Activated T-helper 1 cell treated with anti-CD3 and anti-CD28 coated beads, Interleukin-12 subunit alpha, Interleukin-12 subunit beta, Interleukin-2, Interleukin-4 antibody, amounts not matched to agents 30 ng/mL and 10 ng/mL and 1 ng/mL, durations not matched to agents 14 hours and 24 hours and 36 hours (primary cell): ENCODE measurements at regions of chr16 and their contacts with region 1.

Region 1: GRCh38 chr16:57576429-57576870 is 34.0 kb downstream of the ADGRG5 start:
- DNase-seq: peak; percentile 74
- H3K4me3 Mint-ChIP-seq: no peak overlapping the region
- H3K27ac Mint-ChIP-seq: peak overlapping the region; percentile 8
- H3K4me1 Mint-ChIP-seq: peaks cover 39% of the 10 kb centered on the region
- H3K27me3 Mint-ChIP-seq: peaks cover 2% of the 10 kb centered on the region

Region 2: DNA sequence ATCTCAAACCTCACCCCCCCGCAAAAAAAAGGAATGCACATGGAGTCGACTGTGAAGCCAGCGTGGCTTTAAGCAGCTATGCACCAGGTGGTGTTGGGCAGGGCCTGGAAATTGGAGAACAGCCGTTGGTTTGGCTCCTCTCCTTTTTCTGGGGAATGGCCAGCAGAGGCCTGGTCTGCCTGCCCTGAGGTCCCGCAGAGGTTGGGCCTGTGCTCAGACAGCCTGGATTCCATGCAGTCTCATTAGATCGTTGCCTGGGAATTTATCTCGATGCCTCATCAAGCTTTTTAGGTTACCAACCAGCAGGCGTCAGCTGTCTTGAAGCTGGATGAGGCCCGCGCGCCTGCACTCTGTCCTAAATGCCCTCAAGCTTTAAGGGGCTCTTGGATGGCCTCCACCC is 701.6 kb before region 1 on chr16:
- intact Hi-C with region 1: no loop called
- DNase-seq: no peak
- H3K4me3 Mint-ChIP-seq: no peak overlapping the region
- H3K27ac Mint-ChIP-seq: no peak overlapping the region
- H3K4me1 Mint-ChIP-seq: no peaks in the 10 kb centered on the region
- H3K27me3 Mint-ChIP-seq: peaks cover 3% of the 10 kb centered on the region

Region 3: DNA sequence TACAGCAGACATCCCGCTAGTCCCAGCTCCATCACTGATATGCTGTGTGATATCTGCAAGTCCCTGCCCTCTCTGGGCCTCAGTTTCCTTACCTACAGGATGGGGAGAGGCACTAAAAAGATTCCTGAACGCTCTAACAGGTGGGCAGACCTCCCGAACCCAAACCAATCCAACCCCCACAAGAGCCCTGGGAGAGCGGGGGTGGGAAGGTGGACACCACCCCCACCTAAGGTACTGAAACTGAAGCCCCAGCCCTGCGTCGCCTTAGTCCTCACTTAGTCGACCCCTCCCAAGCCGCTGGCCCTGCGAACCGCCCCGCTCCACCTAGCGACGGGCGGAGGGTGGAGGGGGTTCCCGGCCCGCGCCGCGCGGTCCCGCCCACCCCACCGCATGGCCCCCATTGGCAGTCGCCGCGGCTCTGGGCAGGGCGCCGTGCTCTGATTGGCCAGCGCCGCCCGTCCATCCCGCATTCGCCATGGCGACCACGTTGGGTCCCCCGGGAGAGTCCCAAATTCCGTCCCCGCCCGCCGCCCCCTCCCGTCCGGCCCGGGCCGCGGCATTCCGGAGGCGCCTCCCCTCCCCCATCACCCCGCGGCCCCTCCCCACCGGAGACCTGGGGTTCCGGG is 40.7 kb before region 1 on chr16:
- intact Hi-C with region 1: loop called (anchors 1 kb)
- DNase-seq: peak; percentile 92
- H3K4me3 Mint-ChIP-seq: peak overlapping the region; percentile 78
- H3K27ac Mint-ChIP-seq: peak overlapping the region; percentile 93
- H3K4me1 Mint-ChIP-seq: peaks cover 62% of the 10 kb centered on the region
- H3K27me3 Mint-ChIP-seq: no peaks in the 10 kb centered on the region

Region 4: GRCh38 chr16:57564571-57565270 is 11.7 kb before region 1 on chr16:
- intact Hi-C with region 1: no loop called
- DNase-seq: no peak
- H3K4me3 Mint-ChIP-seq: no peak overlapping the region
- H3K27ac Mint-ChIP-seq: no peak overlapping the region
- H3K4me1 Mint-ChIP-seq: no peaks in the 10 kb centered on the region
- H3K27me3 Mint-ChIP-seq: no peaks in the 10 kb centered on the region

Region 5: GRCh38 chr16:57600048-57600835 is 23.8 kb after region 1 on chr16:
- intact Hi-C with region 1: loop called (anchors 1 kb)
- DNase-seq: no peak
- H3K4me3 Mint-ChIP-seq: no peak overlapping the region
- H3K27ac Mint-ChIP-seq: peak overlapping the region; percentile 24
- H3K4me1 Mint-ChIP-seq: peaks cover 62% of the 10 kb centered on the region
- H3K27me3 Mint-ChIP-seq: no peaks in the 10 kb centered on the region

Region 6: DNA sequence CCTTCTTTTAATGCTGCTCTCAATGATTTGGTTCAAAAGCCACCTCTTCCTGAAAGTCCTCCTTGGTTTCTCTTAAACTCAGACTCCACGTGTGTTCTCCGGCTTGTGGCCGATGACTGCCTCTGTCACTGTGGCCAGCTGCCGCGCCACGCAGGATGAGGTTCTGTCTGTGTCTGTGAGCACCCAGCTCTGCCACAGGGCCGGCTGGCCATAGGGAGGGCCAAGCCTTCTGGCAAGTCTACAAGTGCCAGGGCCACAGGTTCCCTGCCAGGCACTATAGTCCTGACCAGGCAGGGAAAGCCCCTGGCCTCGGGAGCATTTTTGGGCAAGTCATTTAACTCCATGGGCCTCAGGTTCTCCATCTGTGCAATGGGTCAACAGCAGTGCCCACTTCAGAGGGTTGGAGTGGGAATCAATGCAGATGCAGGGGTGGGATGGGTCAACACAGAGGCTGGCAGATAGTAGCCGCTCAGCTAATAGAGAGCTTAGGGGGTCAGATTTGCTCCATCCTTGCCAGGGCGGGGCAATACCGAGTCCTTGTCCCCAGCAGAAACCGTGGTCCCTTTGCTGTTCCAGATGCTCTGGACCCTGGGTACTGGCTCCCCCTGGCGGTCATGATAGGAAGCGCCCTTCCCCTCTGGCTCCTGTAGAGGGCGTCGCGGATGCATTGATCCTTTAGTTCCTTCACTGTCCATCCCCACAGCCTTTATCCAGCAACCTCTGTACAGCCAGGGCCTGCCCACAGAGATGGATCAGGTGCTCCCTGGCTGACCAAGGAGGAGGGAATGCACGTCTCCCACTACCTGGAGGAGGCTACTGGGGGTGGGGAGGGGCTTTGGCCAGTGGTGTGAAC is 72.4 kb after region 1 on chr16:
- intact Hi-C with region 1: loop called (anchors 1 kb)
- DNase-seq: peak; percentile 81
- H3K4me3 Mint-ChIP-seq: no peak overlapping the region
- H3K27ac Mint-ChIP-seq: peak overlapping the region; percentile 45
- H3K4me1 Mint-ChIP-seq: peaks cover 34% of the 10 kb centered on the region
- H3K27me3 Mint-ChIP-seq: no peaks in the 10 kb centered on the region

Region 7: DNA sequence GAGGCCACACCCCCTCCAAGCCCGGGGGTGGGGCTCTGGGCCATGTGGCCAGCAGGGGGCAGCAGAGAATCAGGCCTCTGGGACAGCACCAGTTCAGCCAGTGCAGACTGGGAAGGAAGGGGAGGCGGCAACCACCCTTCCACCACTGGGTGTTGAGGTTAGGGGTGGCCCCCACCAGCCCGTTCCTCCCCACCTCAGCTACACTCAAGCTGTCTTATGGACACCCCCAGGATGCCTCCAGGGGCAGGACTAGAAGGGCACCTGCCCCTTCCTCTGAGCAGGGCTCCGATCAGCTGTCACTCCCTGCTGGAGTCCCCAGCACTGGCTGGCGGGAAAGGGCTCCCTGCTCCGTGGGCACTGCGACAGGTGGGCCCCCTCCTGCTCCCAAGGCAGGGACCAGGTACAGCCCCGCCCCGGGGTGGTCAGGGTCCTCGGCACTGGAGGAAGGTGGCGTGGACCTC is 180.9 kb after region 1 on chr16:
- intact Hi-C with region 1: loop called (anchors 1 kb)
- DNase-seq: peak; percentile 81
- H3K4me3 Mint-ChIP-seq: no peak overlapping the region
- H3K27ac Mint-ChIP-seq: no peak overlapping the region
- H3K4me1 Mint-ChIP-seq: no peaks in the 10 kb centered on the region
- H3K27me3 Mint-ChIP-seq: no peaks in the 10 kb centered on the region

Region 8: GRCh38 chr16:57994778-57995177 is 418.3 kb after region 1 on chr16:
- intact Hi-C with region 1: loop called (anchors 5 kb)
- DNase-seq: peak; percentile 24
- H3K4me3 Mint-ChIP-seq: no peak overlapping the region
- H3K27ac Mint-ChIP-seq: no peak overlapping the region
- H3K4me1 Mint-ChIP-seq: peaks cover 32% of the 10 kb centered on the region
- H3K27me3 Mint-ChIP-seq: no peaks in the 10 kb centered on the region